ENCODE measurements at regions of chr17 and their contacts with region 1.

Region 1: GRCh38 chr17:4891411-4892342 is 7.7 kb upstream of the C17orf107 start:
- DNase-seq: no peak
- ATAC-seq: no peak

Region 2: GRCh38 chr17:4789901-4790704 is 101.6 kb before region 1 on chr17:
- intact Hi-C with region 1: loop called (anchors 5 kb)
- DNase-seq: peak; percentile 92
- ATAC-seq: peak; percentile 89

Region 3: GRCh38 chr17:4920351-4921048 is 28.8 kb after region 1 on chr17:
- intact Hi-C with region 1: no loop called
- DNase-seq: no peak
- ATAC-seq: no peak

Region 4: GRCh38 chr17:6126768-6127167 is 1235.1 kb after region 1 on chr17:
- intact Hi-C with region 1: no loop called
- DNase-seq: no peak
- ATAC-seq: no peak

Measured in sciatic nerve (tissue), 2 donors.